Calu3 (cell line): ENCODE measurements at regions of chr3 and their contacts with region 1.

Region 1: DNA sequence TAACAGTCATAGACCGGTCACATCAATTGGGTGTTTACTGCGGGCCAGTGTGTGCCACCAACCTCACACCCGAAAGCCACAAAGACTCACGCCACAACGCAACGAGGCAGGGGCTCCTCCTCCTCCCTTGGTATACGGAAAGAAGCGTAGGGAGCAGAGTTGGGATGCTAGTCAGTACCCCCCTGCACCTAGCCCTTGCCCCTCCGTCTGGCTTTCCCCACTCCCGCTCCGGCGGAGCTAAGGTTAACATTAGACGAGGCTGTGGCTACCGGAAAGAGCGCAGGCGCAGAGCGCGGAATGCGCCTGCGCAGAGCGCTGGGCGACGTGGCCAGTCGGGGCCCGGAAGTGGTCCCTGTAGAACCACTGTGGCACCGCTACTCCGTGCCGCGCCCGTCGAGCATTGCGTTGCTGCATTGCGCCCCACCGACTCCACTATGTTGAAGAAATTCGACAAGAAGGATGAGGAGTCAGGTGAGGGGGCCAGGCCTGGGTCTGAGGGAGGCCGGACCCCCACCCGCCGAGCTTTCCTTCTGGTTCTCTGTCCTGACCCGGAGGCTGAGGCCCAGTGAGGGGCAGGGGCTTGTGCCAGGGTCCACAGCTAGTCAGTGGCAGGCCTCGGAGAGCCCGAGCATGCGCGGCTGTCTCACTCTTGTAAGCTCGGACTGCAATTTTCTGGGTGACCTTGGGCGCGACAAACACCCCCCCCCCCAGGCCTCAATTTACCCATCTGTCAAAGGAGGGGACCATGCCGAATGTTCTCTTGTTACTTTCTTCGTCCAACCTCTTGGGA is at the start of gene COPG1:
- DNase-seq: peak; percentile 94
- H3K4me3 Mint-ChIP-seq: peak within 1 kb of the TSS; percentile 79
- H3K27ac Mint-ChIP-seq: peak within 1 kb of the TSS; percentile 91
- H3K4me1 Mint-ChIP-seq: peaks cover 28% of the 10 kb centered on the region
- H3K27me3 Mint-ChIP-seq: no peaks in the 10 kb centered on the region
- CTCF ChIP-seq: no peak
- total RNA-seq, gene COPG1: 295 and 302 TPM in 2 replicates

Region 2: GRCh38 chr3:127426444-127427153 is 1822.9 kb before region 1 on chr3:
- CTCF ChIA-PET with region 1: no interaction called
- intact Hi-C with region 1: no loop called
- DNase-seq: no peak
- H3K4me3 Mint-ChIP-seq: no peak overlapping the region
- H3K27ac Mint-ChIP-seq: no peak overlapping the region
- H3K4me1 Mint-ChIP-seq: no peaks in the 10 kb centered on the region
- H3K27me3 Mint-ChIP-seq: peaks cover 100% of the 10 kb centered on the region
- CTCF ChIP-seq: no peak

Region 3: DNA sequence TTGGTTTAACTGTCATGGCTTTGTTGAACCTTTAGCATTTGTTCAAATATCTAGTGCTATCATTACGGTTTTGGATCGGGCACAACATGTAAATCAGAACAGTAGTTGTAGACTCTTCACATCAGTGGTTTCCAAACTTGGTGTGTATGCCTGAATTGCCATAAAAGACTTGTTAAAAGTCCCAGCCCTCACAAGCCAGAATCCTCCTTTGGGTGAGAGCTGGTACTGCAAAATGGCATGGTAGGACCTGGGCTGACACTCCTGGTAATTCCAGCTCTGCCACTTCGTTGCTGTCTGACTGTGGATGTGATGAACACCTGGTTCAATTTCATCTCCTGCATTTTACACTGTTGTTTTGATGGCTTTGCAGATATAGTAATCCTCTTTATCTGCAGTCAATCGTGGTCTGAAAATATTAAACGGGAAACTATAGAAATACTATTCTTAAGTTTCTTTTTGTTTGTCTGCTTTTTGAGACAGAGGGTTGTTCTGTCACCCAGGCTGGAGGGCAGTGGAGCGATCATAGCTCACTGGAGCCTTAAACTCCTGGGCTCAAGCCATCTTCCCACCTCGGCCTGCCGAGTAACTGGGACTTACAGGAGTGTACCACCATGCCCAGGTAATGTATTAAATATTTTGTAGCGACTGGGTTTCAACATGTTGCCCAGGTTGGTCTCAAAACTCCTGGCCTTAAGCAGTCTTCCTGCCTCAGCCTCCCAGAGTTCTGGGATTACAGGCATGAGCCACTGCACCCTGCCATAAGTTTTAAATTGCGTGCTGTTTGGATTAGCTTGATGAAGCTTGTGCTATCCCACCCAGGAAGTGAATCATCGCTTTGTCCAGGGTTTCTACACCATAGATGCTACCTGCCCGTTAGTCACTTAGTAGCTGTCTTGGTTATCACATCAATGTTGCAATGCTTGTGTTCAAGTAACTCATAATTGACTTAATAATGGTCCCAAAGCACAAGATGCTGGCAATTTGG is 461.9 kb before region 1 on chr3:
- CTCF ChIA-PET with region 1: no interaction called
- intact Hi-C with region 1: no loop called
- DNase-seq: peak; percentile 79
- H3K4me3 Mint-ChIP-seq: no peak overlapping the region
- H3K27ac Mint-ChIP-seq: no peak overlapping the region
- H3K4me1 Mint-ChIP-seq: peaks cover 55% of the 10 kb centered on the region
- H3K27me3 Mint-ChIP-seq: no peaks in the 10 kb centered on the region
- CTCF ChIP-seq: peak; percentile 87

Region 4: GRCh38 chr3:129026728-129027543 is 222.5 kb before region 1 on chr3:
- CTCF ChIA-PET with region 1: no interaction called
- intact Hi-C with region 1: loop called (anchors 5 kb)
- DNase-seq: peak; percentile 96
- H3K4me3 Mint-ChIP-seq: peak overlapping the region; percentile 44
- H3K27ac Mint-ChIP-seq: peak overlapping the region; percentile 17
- H3K4me1 Mint-ChIP-seq: peaks cover 8% of the 10 kb centered on the region
- H3K27me3 Mint-ChIP-seq: peaks cover 51% of the 10 kb centered on the region
- CTCF ChIP-seq: peak; percentile 86

Region 5: DNA sequence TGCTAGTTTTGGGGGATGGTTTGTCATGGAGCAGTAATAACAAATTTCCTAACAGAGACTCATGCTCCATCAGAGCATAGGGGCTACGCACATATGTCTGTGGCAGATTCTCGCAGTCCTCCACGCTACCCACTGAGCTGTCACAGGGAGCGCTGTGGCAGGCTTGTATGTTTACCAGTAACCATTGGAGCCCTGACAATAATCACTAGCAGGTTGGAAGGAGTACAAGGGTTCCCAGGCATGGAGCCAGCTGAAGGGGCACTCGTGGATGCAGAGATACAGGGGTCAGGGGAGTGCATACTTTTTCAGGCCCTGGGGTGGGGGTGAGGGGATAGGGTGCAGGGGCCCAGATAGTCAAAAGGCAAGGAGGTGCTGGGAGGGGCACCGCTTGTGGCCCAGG is 196.8 kb before region 1 on chr3:
- CTCF ChIA-PET with region 1: interaction called, 40 read pairs
- intact Hi-C with region 1: loop called (anchors 1 kb)
- DNase-seq: no peak
- H3K4me3 Mint-ChIP-seq: no peak overlapping the region
- H3K27ac Mint-ChIP-seq: no peak overlapping the region
- H3K4me1 Mint-ChIP-seq: peaks cover 38% of the 10 kb centered on the region
- H3K27me3 Mint-ChIP-seq: peaks cover 28% of the 10 kb centered on the region
- CTCF ChIP-seq: no peak

Region 6: GRCh38 chr3:129120254-129121004 is 129.0 kb before region 1 on chr3:
- CTCF ChIA-PET with region 1: interaction called, 19 read pairs
- intact Hi-C with region 1: loop called (anchors 1 kb)
- DNase-seq: peak; percentile 94
- H3K4me3 Mint-ChIP-seq: peak overlapping the region; percentile 69
- H3K27ac Mint-ChIP-seq: peak overlapping the region; percentile 27
- H3K4me1 Mint-ChIP-seq: peaks cover 55% of the 10 kb centered on the region
- H3K27me3 Mint-ChIP-seq: no peaks in the 10 kb centered on the region
- CTCF ChIP-seq: no peak

Region 7: GRCh38 chr3:129160891-129161859 is 88.3 kb before region 1 on chr3 and contains the start of gene ISY1:
- CTCF ChIA-PET with region 1: interaction called, 42 read pairs
- intact Hi-C with region 1: loop called (anchors 1 kb)
- DNase-seq: peak; percentile 96
- H3K4me3 Mint-ChIP-seq: peak within 1 kb of the TSS; percentile 90
- H3K27ac Mint-ChIP-seq: peak within 1 kb of the TSS; percentile 99
- H3K4me1 Mint-ChIP-seq: peaks cover 35% of the 10 kb centered on the region
- H3K27me3 Mint-ChIP-seq: no peaks in the 10 kb centered on the region
- CTCF ChIP-seq: peak; percentile 86
- total RNA-seq, gene ISY1: 63.8 and 77.0 TPM in 2 replicates

Region 8: DNA sequence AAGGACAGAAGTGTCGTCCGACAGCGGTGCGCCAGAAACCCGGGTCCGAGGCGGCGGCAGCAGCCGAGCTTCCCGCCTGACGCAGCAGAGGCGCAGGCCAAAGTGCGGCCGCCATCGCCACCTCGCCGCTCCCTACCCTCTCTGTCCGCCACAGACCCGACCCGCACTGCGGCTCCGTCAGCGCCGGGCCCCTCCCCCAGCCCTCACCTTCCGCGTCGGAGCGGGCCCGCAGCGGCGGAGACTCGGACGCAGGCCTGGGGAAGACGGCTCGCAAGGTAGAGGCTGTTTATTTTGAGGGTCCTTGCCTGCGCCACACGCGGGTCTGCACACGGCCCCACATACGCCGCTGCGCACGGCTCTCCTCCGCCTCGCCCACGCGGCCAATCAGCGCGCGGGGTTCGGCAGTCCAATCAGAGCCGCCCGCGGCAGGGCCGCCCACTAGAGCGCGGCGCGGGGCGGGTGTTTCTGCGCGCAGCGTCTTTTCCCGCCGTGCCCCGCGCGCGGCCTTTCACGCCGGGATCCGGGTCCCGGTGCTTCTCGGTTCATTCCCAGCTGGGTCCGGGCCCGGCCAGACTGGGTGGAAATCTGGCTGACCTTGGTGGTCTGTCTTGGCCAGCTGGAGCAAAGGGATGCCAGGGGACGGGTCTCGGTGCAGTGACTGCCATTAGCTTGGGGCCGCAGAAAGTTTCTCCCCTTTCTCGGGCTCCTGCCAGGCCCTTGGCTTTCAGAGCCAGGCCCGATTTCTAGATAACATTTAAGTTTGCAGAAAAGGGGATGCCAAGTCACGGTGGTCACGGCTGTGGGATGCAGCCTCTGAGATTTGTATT is 65.7 kb before region 1 on chr3 and contains the start of gene CNBP:
- CTCF ChIA-PET with region 1: interaction called, 9 read pairs
- intact Hi-C with region 1: loop called (anchors 1 kb)
- DNase-seq: peak; percentile 99
- H3K4me3 Mint-ChIP-seq: peak within 1 kb of the TSS; percentile 100
- H3K27ac Mint-ChIP-seq: peak within 1 kb of the TSS; percentile 99
- H3K4me1 Mint-ChIP-seq: peaks cover 27% of the 10 kb centered on the region
- H3K27me3 Mint-ChIP-seq: no peaks in the 10 kb centered on the region
- CTCF ChIP-seq: no peak
- total RNA-seq, gene CNBP: 331 and 355 TPM in 2 replicates

Region 9: DNA sequence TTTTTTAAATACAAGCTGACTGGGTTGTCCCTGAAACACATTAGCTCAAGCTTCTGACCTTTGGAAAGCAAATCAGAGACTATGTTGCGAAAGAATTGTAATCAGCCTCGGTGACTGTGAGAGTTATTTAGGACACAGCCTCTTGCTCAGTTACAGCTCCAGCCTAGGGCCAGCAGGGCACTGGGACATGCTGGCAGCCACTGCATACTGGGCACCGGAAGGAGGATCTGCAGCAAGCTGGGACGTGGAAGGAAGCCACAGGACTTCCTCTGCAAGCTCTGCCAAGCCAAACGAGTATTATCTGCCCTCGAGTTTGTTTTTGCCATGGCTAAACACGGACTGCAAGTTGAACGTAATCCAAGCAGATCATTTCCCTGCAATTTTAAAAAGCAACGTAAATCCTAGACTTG is 24.5 kb before region 1 on chr3:
- CTCF ChIA-PET with region 1: interaction called, 14 read pairs
- intact Hi-C with region 1: no loop called
- DNase-seq: peak; percentile 66
- H3K4me3 Mint-ChIP-seq: no peak overlapping the region
- H3K27ac Mint-ChIP-seq: peak overlapping the region; percentile 54
- H3K4me1 Mint-ChIP-seq: peaks cover 32% of the 10 kb centered on the region
- H3K27me3 Mint-ChIP-seq: no peaks in the 10 kb centered on the region
- CTCF ChIP-seq: no peak

Region 10: DNA sequence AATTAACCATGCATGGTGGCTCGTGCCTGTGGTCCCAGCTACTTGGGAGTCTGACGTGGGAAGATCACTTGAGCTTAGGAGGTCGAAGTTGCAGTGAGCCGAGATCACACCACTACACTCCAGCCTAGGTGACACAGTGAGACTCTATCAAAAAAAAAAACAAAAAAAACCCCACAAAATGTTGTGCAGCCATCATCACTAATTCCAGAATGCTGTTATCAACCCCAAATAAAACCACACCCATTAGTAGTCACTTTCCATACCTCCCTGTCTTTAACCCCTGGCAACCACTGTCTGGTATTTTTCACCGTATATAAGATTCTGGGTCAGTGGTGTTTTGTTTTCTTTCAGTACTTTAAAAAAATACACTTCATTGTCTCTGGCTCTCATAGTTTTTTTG is 45.8 kb after region 1 on chr3:
- CTCF ChIA-PET with region 1: no interaction called
- intact Hi-C with region 1: no loop called
- DNase-seq: no peak
- H3K4me3 Mint-ChIP-seq: no peak overlapping the region
- H3K27ac Mint-ChIP-seq: no peak overlapping the region
- H3K4me1 Mint-ChIP-seq: no peaks in the 10 kb centered on the region
- H3K27me3 Mint-ChIP-seq: no peaks in the 10 kb centered on the region
- CTCF ChIP-seq: no peak

Region 11: GRCh38 chr3:129718201-129718600 is 468.7 kb after region 1 on chr3:
- CTCF ChIA-PET with region 1: no interaction called
- intact Hi-C with region 1: no loop called
- DNase-seq: no peak
- H3K4me3 Mint-ChIP-seq: no peak overlapping the region
- H3K27ac Mint-ChIP-seq: no peak overlapping the region
- H3K4me1 Mint-ChIP-seq: no peaks in the 10 kb centered on the region
- H3K27me3 Mint-ChIP-seq: no peaks in the 10 kb centered on the region
- CTCF ChIP-seq: no peak